A549 (cell line): ENCODE measurements at regions of chr20 and their contacts with region 1.

Region 1: GRCh38 chr20:12977328-12978125 is 31.2 kb upstream of the SPTLC3 start:
- DNase-seq: no peak
- ATAC-seq: peak in 1 of 2 experiments; percentile 24; a peak in 1 of 6 replicates
- H3K4me3 ChIP-seq: no peak overlapping the region
- H3K27ac ChIP-seq: peak overlapping the region in 1 of 2 experiments; percentile 22; a peak in 2 of 6 replicates
- H3K4me1 ChIP-seq: peaks cover 24% of the 10 kb centered on the region; the same call in 2 of the 3 replicates
- CTCF ChIP-seq: no peak
- EP300 ChIP-seq: no peak
- POLR2A ChIP-seq: no peak
- RAD21 ChIP-seq: no peak

Region 2: DNA sequence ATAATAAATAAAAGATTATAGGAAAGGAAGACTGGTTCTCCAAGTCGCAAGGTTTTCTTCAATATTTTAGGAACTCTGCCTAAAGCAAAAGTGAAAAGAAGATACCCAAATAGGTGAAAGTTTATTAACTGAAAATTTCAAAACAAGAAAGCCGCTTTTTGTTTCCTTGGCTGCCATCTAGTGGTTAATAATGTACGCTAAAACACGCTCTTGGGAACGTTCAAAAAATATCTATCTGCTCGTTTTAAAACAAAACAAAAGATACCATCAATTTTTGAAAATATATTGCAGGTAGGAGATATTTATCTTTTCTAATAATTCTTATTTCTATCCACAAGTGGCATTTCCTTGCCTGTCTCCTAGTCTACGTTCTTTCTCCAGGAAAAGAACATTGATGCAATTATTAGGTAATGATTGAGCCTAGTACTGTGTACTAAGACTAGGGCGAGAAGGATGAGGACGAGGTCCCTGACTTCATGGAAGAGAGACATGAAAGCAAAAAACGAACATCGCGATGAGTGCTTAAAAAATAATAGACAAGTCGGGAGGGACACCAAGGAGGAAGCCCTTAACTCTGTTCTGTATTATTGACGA is 128.4 kb after region 1 on chr20:
- CTCF ChIA-PET with region 1: interaction called, 13 read pairs
- POLR2A ChIA-PET with region 1: no interaction called
- DNase-seq: peak; percentile 26 to 43
- ATAC-seq: peak in 1 of 2 experiments; percentile 72; a peak in 3 of 6 replicates
- H3K4me3 ChIP-seq: no peak overlapping the region
- H3K27ac ChIP-seq: no peak overlapping the region
- H3K4me1 ChIP-seq: no peaks in the 10 kb centered on the region
- CTCF ChIP-seq: peak; percentile 96
- EP300 ChIP-seq: no peak
- POLR2A ChIP-seq: no peak
- RAD21 ChIP-seq: peak; percentile 92 to 97